GM10248 (cell line): ENCODE measurements at regions of chr5 and their contacts with region 1.

Region 1: GRCh38 chr5:151719228-151720000 is 32.7 kb upstream of the SPARC start:
- DNase-seq: no peak
- CTCF ChIP-seq: peak; percentile 40

Region 2: DNA sequence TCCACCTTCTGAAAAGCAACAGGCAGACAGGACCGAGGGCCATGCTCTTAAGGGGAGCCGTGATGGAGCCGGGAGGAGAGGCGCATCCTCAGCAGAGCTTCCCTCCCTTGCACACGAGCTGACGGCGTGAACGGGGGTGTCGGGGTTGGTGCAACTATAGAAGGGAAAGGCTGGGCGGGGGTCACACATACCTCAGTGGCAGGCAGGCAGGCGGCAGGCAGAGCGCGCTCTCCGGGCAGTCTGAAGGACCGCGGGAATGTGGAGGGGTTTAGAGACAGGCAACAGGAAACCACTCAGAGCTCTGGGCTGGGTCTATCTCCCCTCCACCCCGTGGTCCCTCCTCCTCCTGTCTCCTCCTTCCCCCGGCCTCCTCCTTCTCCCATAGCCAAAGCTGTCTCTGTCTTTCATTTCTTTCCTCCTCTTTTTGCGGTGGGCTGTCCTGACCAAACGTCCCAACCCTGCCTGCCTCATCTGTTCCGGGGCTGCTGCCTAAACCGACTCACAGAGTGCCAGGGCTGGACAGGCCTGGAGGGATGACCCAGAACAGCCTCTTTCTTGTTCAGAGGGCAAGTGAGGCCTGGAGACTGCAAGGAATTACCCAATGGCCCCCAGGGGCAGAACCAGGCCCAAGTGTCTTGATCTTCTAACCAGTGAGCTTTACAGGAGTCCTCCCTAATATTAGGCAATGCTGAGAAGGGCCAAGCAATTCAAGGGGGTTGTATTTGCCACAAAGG is 32.6 kb before region 1 on chr5 and contains the start of gene SPARC:
- CTCF ChIA-PET with region 1: interaction called, 19 read pairs
- POLR2A ChIA-PET with region 1: no interaction called
- DNase-seq: peak; percentile 45
- CTCF ChIP-seq: no peak

Region 3: DNA sequence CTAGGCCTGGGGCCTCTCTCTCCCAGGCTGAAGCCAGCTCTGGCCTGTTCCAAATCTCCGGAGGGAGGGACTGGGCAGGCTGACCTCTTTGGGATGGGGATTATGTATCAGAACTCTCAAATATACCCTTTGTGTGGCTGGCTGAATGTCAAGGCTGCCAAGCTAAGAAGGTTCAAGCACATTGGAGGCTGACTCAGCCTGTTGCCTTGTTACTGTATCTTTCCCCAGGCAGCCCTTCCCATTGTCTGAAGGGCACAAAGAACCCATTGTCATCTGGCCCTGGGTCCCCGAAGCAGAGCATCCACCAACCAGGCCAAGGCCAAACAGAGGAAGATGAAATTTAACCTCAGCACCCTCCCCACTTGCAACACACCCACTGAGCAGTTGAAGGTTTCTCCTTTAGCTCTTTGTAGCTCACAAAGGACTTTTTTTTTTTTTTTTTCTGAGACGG is 25.4 kb before region 1 on chr5:
- CTCF ChIA-PET with region 1: interaction called, 20 read pairs
- POLR2A ChIA-PET with region 1: no interaction called
- DNase-seq: no peak
- CTCF ChIP-seq: no peak

Region 4: DNA sequence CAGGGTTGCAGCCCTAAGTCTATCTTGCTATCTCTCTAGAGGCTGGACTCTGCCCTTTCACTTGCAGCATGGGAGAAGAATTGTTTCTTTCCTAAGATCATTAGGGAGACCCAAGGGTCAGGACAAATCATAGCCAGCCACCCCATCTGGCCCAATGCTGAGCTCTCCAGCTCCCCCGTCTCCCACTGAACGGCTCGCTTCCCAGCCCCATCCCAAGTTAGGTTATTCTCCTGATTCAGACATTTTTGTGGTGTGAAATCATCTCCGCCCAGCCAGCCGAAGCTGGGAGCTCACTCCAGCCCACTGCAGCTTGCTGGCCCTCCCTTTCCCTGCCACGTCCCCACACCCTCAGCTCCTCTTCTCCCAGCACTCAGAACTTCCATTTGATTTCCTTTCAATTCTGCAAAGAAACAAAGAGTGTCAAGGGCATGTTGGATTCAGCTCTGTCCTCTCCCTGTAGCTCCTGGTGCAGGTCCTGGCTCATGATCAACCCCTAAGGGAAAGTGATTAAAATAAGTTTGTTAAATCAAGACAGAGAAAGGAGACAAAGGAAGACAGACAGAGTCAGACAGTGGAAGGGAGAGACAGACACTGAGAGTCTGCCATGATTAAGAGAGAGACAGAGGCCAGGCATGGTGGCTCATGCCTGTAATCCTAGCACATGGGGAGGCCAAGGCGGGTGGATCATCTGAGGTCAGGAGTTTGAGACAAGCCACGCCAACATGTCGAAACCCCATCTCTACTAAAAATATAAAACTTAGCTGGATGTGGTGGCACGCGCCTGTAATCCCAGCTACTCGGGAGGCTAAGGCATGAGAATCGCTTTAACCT is 20.1 kb before region 1 on chr5:
- CTCF ChIA-PET with region 1: interaction called, 92 read pairs
- POLR2A ChIA-PET with region 1: interaction called, 4 read pairs
- DNase-seq: no peak
- CTCF ChIP-seq: no peak

Region 5: DNA sequence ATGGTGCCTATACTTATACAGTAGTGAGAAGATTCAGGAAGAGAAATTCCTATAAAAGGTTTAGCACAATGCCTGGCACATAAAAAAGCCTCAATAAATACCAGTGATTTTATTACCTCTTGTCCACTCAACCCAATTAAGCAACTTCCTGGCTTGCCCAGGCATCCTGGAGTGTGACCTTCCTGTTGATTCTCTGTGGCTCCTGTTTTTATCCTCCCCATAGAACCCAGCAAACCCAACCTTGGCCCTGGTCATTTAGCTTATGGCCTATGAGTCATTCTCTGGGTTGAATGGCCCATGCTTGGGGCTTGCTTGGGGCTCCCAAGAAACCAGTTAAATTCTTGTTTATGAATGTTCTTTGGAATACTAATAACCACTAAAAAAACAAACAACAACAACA is 11.3 kb before region 1 on chr5:
- CTCF ChIA-PET with region 1: interaction called, 92 read pairs
- POLR2A ChIA-PET with region 1: interaction called, 4 read pairs
- DNase-seq: no peak
- CTCF ChIP-seq: no peak

Region 6: GRCh38 chr5:151733358-151734063 is 14.1 kb after region 1 on chr5:
- CTCF ChIA-PET with region 1: interaction called, 147 read pairs
- POLR2A ChIA-PET with region 1: no interaction called
- DNase-seq: no peak
- CTCF ChIP-seq: no peak

Region 7: DNA sequence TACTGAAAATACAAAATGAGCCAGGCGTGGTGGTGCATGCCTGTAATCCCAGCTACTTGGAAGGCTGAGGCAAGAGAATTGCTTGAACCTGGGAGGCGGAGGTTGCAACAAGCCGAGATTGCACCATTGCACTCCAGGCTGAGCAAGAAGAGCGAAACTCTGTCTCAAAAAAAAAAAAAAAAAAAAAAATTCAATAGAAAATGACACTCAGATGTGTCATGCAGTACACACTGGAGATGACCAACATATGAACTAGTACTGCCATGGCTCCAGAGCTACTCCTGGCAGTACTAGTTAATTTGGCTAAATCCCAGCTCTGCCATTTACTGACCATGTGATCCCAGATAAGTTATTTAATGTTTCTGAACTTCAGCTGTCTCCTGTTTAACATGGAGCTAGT is 31.7 kb after region 1 on chr5:
- CTCF ChIA-PET with region 1: interaction called, 147 read pairs
- POLR2A ChIA-PET with region 1: interaction called, 3 read pairs
- DNase-seq: no peak
- CTCF ChIP-seq: no peak

Region 8: DNA sequence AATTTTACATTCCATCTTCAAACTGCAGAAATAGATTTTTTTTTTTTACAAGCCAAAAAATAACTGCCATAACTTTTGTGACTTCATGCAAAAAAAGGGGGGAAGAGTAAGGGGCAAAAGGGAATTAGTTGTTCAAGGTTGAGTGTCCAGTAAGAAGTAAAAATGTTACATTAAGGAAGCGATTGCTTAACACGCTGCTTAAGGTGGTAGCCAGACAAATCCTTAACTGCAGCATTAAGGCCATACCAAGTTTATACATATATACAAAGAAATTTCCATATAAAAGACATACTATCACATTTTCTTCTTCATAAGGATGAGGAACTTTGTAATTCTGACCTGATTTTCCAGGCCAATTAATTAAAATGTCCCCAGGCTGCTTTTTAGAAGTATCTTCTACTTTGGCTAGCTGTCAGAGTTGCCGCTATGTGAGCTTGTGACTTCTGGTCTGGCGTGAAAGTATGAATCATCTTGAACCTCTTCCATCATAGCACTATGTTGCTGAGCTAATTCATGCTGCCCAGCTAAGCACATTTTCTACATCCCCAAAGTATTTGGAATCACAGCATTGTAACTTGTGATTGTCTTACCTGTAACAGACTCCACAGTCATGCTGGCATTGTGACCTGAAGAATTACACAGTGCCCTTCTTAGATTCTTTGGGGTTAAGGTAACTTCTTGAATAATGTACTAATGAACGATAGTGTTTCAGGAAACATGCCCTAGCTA is 92.3 kb after region 1 on chr5:
- CTCF ChIA-PET with region 1: no interaction called
- POLR2A ChIA-PET with region 1: no interaction called
- DNase-seq: no peak
- CTCF ChIP-seq: no peak

Region 9: DNA sequence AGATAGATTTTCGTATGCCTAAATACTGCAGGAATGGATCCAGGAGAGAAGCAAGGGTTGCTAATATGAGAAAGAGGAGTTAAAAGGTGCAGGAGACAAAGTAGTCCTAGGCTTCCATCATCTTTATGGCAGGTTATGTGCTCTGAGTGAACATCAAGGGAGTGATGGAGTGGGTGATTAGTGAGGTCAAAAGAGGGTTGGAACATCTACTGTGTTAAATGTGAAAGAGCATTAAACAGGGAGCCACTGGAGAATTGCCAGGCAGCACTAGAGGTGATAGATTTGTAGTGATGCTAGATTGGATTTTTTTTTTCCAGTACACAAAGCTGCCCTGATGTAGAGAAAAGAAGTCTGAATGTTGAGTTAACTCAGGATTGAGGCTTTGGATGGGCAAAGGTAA is 486.4 kb after region 1 on chr5:
- CTCF ChIA-PET with region 1: no interaction called
- POLR2A ChIA-PET with region 1: no interaction called
- DNase-seq: no peak
- CTCF ChIP-seq: no peak